AG04449 (cell line): ENCODE measurements at regions of chr20 and their contacts with region 1.

Region 1: GRCh38 chr20:39049684-39050554 is 87.8 kb downstream of the DHX35 start:
- DNase-seq: no peak
- H3K4me3 ChIP-seq: peak overlapping the region; percentile 91
- CTCF ChIP-seq: peak; percentile 99

Region 2: GRCh38 chr20:38645980-38646858 is 403.7 kb before region 1 on chr20:
- CTCF ChIA-PET with region 1: interaction called, 21 read pairs
- POLR2A ChIA-PET with region 1: no interaction called
- DNase-seq: no peak
- H3K4me3 ChIP-seq: peak overlapping the region; percentile 32; the same call in 1 of the 2 replicates
- CTCF ChIP-seq: peak; percentile 99

Region 3: GRCh38 chr20:38757145-38757775 is 292.7 kb before region 1 on chr20:
- CTCF ChIA-PET with region 1: no interaction called
- POLR2A ChIA-PET with region 1: no interaction called
- DNase-seq: no peak
- H3K4me3 ChIP-seq: no peak overlapping the region
- CTCF ChIP-seq: no peak

Region 4: GRCh38 chr20:38907918-38908677 is 141.8 kb before region 1 on chr20:
- CTCF ChIA-PET with region 1: interaction called, 14 read pairs
- POLR2A ChIA-PET with region 1: no interaction called
- DNase-seq: no peak
- H3K4me3 ChIP-seq: no peak overlapping the region
- CTCF ChIP-seq: no peak

Region 5: GRCh38 chr20:38935967-38936407 is 113.9 kb before region 1 on chr20:
- CTCF ChIA-PET with region 1: interaction called, 296 read pairs
- POLR2A ChIA-PET with region 1: no interaction called
- DNase-seq: no peak
- H3K4me3 ChIP-seq: no peak overlapping the region
- CTCF ChIP-seq: no peak

Region 6: GRCh38 chr20:38969708-38970107 is 80.2 kb before region 1 on chr20:
- CTCF ChIA-PET with region 1: interaction called, 23 read pairs
- POLR2A ChIA-PET with region 1: no interaction called
- DNase-seq: no peak
- H3K4me3 ChIP-seq: no peak overlapping the region
- CTCF ChIP-seq: no peak

Region 7: GRCh38 chr20:39019805-39020325 is 30.1 kb before region 1 on chr20:
- CTCF ChIA-PET with region 1: interaction called, 12 read pairs
- POLR2A ChIA-PET with region 1: no interaction called
- DNase-seq: no peak
- H3K4me3 ChIP-seq: no peak overlapping the region
- CTCF ChIP-seq: no peak

Region 8: DNA sequence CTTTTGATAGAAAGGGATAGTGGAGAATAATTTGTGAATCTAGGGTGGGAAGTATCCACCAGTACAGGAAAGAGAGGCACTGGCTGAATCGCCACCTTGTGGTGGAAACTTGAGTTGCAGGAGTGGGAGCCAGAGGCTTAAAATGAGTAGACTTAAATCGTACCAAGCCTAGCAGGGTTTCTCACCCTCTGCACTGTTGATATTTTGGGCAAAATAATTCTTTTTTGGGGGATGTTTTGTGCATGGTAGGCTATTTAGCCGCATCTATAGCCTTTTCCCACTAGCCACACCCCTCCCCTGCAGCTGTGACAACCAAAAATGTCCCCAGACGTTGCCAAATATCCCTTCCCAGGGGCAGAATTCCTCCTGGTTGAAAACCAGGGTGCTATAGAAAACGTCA is 31.3 kb after region 1 on chr20:
- CTCF ChIA-PET with region 1: interaction called, 683 read pairs
- POLR2A ChIA-PET with region 1: no interaction called
- DNase-seq: peak; percentile 28
- H3K4me3 ChIP-seq: no peak overlapping the region
- CTCF ChIP-seq: peak; percentile 86

Region 9: GRCh38 chr20:39289316-39289715 is 239.4 kb after region 1 on chr20:
- CTCF ChIA-PET with region 1: no interaction called
- POLR2A ChIA-PET with region 1: no interaction called
- DNase-seq: no peak
- H3K4me3 ChIP-seq: no peak overlapping the region
- CTCF ChIP-seq: no peak